Activated CD8-positive, alpha-beta T cell treated with anti-CD3 and anti-CD28 coated beads, Interleukin-2, amount 10 ng/mL, durations not matched to agents 7 days and 5 days (primary cell): ENCODE measurements at regions of chr14 and their contacts with region 1.

Region 1: GRCh38 chr14:25411781-25412757 is 362.1 kb upstream of the STXBP6 start:
- DNase-seq: no peak
- ATAC-seq: no peak
- H3K4me3 Mint-ChIP-seq: no peak overlapping the region
- H3K27ac Mint-ChIP-seq: no peak overlapping the region
- H3K4me1 Mint-ChIP-seq: no peaks in the 10 kb centered on the region
- H3K27me3 Mint-ChIP-seq: no peaks in the 10 kb centered on the region

Region 2: DNA sequence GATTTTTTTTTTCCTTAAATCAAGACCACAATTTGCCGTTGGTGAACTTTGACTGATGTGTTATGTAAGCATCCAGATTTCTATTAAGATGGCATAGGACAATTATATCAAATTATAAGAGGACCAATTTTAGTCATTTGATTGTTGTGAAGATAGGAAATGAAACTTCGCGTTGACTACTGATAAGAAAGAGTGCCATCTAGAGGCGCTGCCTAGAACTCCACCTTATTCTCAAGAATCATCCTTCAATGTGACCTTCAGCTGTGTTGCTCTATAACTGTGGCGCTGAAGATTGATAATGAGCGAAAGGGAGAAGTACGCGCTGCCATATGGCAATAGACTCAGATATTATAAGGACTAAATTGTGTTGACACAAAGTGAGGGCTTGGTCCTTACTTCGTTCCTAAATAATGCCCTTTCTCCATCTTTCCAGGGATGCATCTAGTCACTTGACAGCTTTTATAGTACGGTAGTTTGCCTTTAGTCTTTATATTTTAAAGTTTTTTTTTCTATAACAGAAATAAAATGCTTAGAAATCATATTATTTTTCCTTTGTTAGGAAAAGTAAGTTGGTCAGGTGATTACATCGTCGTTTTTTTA is 11.4 kb before region 1 on chr14:
- CTCF ChIA-PET with region 1: interaction called, 15 read pairs
- POLR2A ChIA-PET with region 1: no interaction called
- DNase-seq: peak; percentile 55
- ATAC-seq: no peak
- H3K4me3 Mint-ChIP-seq: no peak overlapping the region
- H3K27ac Mint-ChIP-seq: no peak overlapping the region
- H3K4me1 Mint-ChIP-seq: no peaks in the 10 kb centered on the region
- H3K27me3 Mint-ChIP-seq: no peaks in the 10 kb centered on the region

Region 3: DNA sequence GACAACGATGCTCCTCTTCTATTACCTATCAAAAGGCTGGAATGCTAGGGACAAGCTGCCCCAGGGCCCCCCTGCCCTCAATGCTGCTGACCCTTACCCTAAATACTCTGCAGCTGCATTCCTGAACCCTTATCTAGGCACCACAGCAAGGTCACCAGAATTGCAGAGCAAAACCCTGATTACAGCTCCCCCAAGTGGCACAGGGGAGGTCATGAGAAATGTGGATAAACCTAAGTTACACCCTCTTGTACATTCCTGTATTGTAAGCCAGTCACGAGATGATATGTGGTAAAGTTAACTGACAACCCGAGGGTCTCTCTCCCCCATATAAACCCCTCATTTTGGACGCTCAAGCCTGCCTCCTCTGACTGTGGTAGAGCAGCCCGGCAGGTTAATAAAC is 49.7 kb after region 1 on chr14:
- CTCF ChIA-PET with region 1: no interaction called
- POLR2A ChIA-PET with region 1: no interaction called
- DNase-seq: no peak
- ATAC-seq: no peak
- H3K4me3 Mint-ChIP-seq: no peak overlapping the region
- H3K27ac Mint-ChIP-seq: no peak overlapping the region
- H3K4me1 Mint-ChIP-seq: no peaks in the 10 kb centered on the region
- H3K27me3 Mint-ChIP-seq: no peaks in the 10 kb centered on the region